ENCODE measurements at regions of chr12 and their contacts with region 1.

Region 1: GRCh38 chr12:4857472-4858291 is 52.0 kb upstream of the KCNA1 start:
- DNase-seq: peak; percentile 84
- ATAC-seq: peak; percentile 86
- H3K4me3 Mint-ChIP-seq: peak overlapping the region; percentile 25
- H3K27ac Mint-ChIP-seq: no peak overlapping the region
- H3K4me1 Mint-ChIP-seq: peaks cover 15% of the 10 kb centered on the region
- H3K27me3 Mint-ChIP-seq: peaks cover 39% of the 10 kb centered on the region

Region 2: DNA sequence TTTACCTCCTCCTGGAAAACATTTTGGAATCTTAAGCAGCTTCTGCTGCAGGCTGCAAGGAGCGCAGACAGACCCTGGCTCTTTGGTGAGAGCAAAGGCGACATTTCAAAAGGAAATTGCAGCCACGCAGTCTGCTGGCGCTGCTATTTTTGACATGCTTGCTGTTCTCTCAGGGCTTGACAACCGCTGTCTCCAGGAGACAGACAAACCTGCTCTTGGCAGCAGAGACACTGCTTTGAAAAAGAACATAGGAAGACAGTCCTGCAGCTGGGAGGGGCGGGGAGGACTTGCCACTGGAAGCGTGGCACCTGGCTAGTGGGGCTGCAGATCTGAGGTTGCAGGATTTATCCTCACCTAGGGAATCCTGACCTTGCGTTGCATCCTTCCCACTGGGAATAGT is 39.8 kb before region 1 on chr12:
- CTCF ChIA-PET with region 1: interaction called, 24 read pairs
- DNase-seq: no peak
- ATAC-seq: no peak
- H3K4me3 Mint-ChIP-seq: no peak overlapping the region
- H3K27ac Mint-ChIP-seq: no peak overlapping the region
- H3K4me1 Mint-ChIP-seq: peaks cover 3% of the 10 kb centered on the region
- H3K27me3 Mint-ChIP-seq: peaks cover 10% of the 10 kb centered on the region

Region 3: DNA sequence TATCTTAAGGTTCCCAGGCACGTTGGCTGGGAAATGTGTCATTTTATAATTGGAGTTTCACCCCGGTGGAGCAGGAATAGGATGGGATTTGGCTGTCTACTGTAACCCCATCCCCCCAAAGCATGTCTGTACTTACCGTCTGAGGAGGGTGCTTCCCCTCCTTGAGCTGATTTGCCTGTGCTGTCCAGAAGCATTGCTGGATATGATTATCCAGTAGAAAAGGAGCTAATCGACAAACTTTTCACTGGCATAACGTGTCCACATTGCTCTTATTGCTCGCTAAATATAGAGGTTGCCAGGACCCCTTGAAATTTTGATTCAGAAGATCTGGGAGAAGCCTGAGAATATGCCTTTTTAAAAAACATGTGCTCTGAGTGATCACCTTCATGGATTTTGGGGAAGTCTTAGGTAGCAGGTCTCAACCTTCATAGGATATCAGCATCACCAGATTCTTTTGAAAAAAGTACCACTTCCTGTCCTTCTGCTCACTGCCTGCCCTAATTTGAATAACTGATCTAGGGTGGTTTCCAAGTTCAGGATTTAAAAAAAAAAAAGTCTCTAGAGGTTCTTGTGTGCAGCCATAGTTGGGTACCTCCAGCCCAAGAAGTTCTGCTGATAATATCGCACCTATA is 28.4 kb before region 1 on chr12:
- CTCF ChIA-PET with region 1: interaction called, 101 read pairs
- DNase-seq: no peak
- ATAC-seq: peak; percentile 82
- H3K4me3 Mint-ChIP-seq: peak overlapping the region; percentile 82
- H3K27ac Mint-ChIP-seq: peak overlapping the region; percentile 98
- H3K4me1 Mint-ChIP-seq: peaks cover 64% of the 10 kb centered on the region
- H3K27me3 Mint-ChIP-seq: no peaks in the 10 kb centered on the region

Region 4: GRCh38 chr12:4910502-4911315 is 53.0 kb after region 1 on chr12:
- CTCF ChIA-PET with region 1: interaction called, 21 read pairs
- DNase-seq: no peak
- ATAC-seq: no peak
- H3K4me3 Mint-ChIP-seq: peak overlapping the region; percentile 78
- H3K27ac Mint-ChIP-seq: peak overlapping the region; percentile 55
- H3K4me1 Mint-ChIP-seq: peaks cover 16% of the 10 kb centered on the region
- H3K27me3 Mint-ChIP-seq: peaks cover 63% of the 10 kb centered on the region

Region 5: GRCh38 chr12:5083955-5084849 is 226.5 kb after region 1 on chr12:
- CTCF ChIA-PET with region 1: interaction called, 18 read pairs
- DNase-seq: no peak
- ATAC-seq: no peak
- H3K4me3 Mint-ChIP-seq: no peak overlapping the region
- H3K27ac Mint-ChIP-seq: no peak overlapping the region
- H3K4me1 Mint-ChIP-seq: no peaks in the 10 kb centered on the region
- H3K27me3 Mint-ChIP-seq: peaks cover 3% of the 10 kb centered on the region